OCI-LY7 (cell line): ENCODE measurements at regions of chr10 and their contacts with region 1.

Region 1: DNA sequence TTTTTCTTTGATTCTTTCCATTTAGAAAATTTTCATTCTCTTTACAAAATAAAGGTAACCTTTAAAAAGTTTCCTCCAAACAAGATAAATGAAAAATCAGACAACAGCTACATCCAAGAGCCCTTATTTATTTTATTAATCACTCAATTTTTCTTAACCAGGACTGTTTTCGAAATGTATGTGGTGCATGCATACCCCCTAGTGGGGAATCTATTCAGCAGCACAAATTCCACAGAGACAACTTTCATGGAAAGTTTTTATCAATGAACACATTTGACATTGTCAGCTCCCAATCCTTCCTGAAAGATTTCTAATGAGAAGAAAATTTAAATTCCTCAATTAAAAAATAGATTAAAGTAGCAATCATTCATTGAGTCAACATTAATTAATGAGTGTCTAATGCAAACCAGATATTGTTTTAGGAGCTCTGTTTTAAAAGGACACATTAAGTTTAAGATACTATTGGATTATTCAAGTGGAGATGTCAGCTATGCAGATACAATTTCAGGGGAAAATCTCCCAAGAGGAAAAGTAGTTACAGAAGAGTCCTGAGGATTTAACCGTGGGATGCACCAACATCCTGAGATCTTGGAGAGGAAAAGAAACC is 5.2 kb upstream of the HTR7 start:
- DNase-seq: peak; percentile 13
- H3K4me3 ChIP-seq: no peak overlapping the region
- H3K27ac ChIP-seq: no peak overlapping the region
- H3K4me1 ChIP-seq: peaks cover 4% of the 10 kb centered on the region
- CTCF ChIP-seq: peak; percentile 86

Region 2: DNA sequence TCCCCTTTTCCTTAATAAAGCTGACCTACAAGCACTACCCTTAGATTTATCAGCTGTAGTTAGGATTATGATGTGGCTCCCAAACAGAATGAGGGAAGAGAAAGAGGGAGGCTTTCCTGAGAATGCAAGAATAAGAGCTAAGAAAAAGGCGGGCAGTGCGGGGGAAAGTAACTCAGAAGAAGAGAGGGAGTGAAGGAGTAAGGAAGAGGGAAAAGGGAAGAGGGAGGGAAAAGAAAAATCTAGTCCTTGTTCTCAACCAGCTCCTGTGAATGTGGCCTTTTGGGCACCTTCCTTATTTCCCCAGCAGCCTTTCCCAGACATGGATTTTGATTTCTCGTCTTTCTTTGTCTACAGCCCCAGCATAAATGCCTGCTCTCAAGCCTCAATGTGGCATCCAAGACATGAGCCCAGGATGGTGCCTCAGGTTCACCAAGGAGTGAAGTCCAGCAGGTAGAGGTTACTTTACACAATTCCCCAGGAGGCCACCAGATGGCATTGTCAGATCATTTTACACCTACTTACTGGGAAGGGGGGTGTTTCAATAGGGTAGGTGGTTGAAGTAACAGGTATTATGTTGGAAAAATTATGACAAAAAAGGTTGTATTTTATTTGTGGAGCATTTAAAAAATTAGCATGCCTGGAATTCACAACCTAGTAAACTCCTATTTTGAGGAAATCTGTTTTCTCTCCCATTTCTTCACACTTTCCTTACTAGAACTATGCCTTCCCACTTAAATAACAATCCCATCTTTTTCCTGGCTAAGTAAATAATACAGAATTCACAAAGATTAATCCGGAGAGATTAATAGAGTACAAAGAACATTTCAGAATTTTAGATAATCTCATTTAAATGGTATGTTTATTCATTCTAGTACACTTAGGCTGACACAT is 111.7 kb before region 1 on chr10:
- CTCF ChIA-PET with region 1: no interaction called
- POLR2A ChIA-PET with region 1: interaction called, 4 read pairs
- intact Hi-C with region 1: loop called (anchors 1 kb)
- DNase-seq: peak; percentile 44
- H3K4me3 ChIP-seq: no peak overlapping the region
- H3K27ac ChIP-seq: no peak overlapping the region
- H3K4me1 ChIP-seq: no peaks in the 10 kb centered on the region
- CTCF ChIP-seq: peak; percentile 86